ENCODE measurements at regions of chr11 and their contacts with region 1.

Region 1: DNA sequence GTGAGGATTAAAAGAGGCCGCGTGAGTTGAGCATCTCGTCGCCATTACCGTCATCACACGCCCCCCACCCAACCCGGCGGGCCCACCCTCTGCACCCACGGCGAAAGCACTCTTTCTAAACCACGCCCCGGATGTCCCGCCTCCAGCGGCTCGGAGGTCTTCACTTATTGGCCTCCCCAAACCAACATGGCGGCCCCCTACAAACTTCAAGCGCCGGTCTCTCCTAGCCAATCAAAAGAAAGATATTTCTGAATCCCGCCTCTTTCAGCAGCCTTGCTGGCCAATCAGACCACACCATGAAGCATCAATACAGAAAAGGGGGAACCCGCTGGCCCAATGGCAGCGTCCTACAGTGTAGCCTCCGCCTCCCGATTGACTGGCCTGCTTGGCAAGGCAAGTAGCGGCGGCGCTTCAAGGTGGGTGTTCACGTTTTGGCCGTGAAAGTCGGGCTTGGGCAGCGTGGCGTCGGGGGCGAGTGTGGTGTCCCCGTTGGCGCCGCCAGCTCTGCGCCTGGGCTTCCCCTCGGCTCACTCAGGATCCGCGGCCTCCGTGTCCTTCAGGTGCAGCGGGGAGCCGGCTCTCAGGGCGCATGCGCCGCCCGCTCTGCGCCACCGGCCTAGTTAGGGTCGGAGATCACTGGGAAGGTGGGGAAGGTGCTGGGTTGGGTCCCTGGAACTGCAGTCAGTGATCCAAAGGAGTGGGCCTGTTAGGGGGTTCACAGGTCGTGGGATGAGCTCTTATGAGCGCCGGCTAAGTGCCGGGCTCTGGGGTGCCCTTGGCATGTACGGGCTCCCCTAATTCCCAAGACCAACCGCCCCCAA is at the start of gene NDUFS8:
- DNase-seq: peak; percentile 99
- ATAC-seq: peak; percentile 78 to 91
- H3K4me3 ChIP-seq: peak within 1 kb of the TSS; percentile 94
- H3K27ac ChIP-seq: peak within 1 kb of the TSS; percentile 94 to 98
- H3K4me1 ChIP-seq: peaks cover 68% of the 10 kb centered on the region
- CTCF ChIP-seq: no peak
- EP300 ChIP-seq: no peak
- POLR2A ChIP-seq: peak; percentile 64
- RAD21 ChIP-seq: no peak
- polyA plus RNA-seq, gene NDUFS8: 71.0 and 73.7 TPM in 2 replicates

Region 2: GRCh38 chr11:68003846-68004550 is 26.5 kb before region 1 on chr11 and contains the start of gene UNC93B1:
- CTCF ChIA-PET with region 1: interaction called, 204 read pairs
- POLR2A ChIA-PET with region 1: interaction called, 16 read pairs
- DNase-seq: peak in 1 of 2 experiments; percentile 92
- ATAC-seq: peak; percentile 73 to 85
- H3K4me3 ChIP-seq: peak within 1 kb of the TSS; percentile 97
- H3K27ac ChIP-seq: peak within 1 kb of the TSS; percentile 91 to 99
- H3K4me1 ChIP-seq: peaks cover 44% of the 10 kb centered on the region
- CTCF ChIP-seq: no peak
- EP300 ChIP-seq: no peak
- POLR2A ChIP-seq: peak; percentile 48
- RAD21 ChIP-seq: no peak
- polyA plus RNA-seq, gene UNC93B1: 49.4 and 55.5 TPM in 2 replicates

Region 3: DNA sequence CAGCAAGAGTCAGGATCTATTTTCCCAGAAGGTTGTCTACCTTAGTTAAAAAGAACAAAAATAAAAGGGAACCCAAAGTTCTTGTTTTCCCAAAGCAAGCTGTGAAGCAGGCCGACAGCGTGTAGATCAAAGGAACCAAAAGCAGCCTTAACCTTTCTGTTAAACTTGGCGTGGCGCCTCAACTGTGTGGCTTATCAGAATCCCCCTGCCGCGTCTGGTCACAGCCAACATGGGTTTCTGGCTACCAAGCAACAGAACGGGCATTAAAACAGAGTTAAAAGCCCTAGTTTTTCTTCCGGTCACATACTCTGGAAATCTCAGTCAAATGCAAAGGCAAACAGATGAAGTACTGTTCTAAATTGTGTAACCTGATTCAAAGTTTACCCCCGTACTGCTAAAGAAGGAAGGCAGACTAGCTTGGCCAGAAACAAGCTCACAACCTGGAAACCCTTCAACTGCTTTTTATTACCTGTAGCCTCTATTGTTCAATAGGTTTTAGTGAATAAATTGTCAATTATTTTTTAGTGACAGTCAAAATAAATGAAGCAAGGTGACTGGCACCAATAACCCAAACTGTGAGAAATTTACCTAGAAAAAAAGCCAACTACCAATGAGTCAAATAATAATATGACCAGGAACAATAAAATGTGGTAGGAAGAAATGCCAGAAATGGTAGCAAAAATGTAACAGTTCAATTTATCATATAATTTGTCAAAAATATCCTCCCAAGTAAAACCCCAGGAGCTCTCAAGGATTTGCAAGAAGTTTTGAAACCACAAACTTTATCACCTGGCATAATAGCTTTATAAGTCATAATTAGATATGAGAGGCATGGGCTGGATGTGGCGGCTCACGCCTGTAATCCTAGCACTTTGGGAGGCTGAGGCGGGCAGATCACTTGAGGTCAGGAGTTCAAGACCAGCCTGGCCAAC is 69.2 kb after region 1 on chr11:
- CTCF ChIA-PET with region 1: no interaction called
- POLR2A ChIA-PET with region 1: no interaction called
- DNase-seq: no peak
- ATAC-seq: no peak
- H3K4me3 ChIP-seq: no peak overlapping the region
- H3K27ac ChIP-seq: peak overlapping the region in 1 of 2 experiments; percentile 9; a peak in 1 of 6 replicates
- H3K4me1 ChIP-seq: peaks cover 8% of the 10 kb centered on the region; the same call in 2 of the 3 replicates
- CTCF ChIP-seq: no peak
- EP300 ChIP-seq: no peak
- POLR2A ChIP-seq: no peak
- RAD21 ChIP-seq: no peak